Heart left ventricle (tissue), 16 donors: ENCODE measurements at regions of chr6 and their contacts with region 1.

Region 1: DNA sequence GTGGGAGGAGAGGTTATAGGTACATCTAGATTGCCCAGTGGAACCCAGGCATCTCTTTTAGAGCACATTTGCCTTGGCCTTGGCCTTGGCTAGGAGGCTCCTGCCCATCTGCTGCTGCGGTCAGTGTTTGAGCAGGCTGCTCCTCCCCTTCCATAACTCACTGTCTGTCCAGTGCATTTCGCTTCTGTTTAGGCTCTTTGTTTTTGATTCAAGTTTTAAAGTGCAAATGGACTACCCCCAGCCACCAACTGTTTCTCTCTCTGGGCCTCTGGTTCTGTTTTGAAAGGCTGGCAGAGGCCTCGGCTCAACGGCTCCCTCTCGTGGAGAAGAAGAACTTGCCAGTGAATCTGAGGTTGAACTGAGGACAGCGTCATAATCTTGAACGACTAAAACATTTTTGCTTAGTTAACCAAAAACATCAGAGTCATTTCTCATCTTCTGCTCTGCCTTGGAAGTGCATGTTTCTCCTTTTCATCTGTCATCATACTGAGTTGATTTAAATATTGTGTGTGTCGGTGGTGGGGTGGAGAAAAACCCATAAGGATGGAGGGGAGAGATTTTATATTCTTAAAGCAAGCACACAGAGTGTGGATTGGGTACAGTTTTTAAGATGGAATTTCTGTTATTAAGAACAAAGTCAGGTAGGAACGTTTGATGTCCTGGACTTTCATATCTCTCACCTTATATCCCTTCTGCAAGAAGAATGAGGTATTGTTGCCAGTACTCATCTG is 171.4 kb downstream of the DTNBP1 start:
- DNase-seq: peak in 4 of 5 donors; percentile 71 to 81 (median 80)
- ATAC-seq: peak; percentile 43 to 69 (median 62)
- H3K4me3 ChIP-seq: no peak overlapping the region
- H3K27ac ChIP-seq: peak overlapping the region in 7 of 12 donors; percentile 14 to 58 (median 32)
- H3K4me1 ChIP-seq: peaks cover 0 to 47% (median 30%) of the 10 kb centered on the region in 12 donors
- H3K27me3 ChIP-seq: no peaks in the 10 kb centered on the region
- CTCF ChIP-seq: peak; percentile 89 to 98 (median 96)
- POLR2A ChIP-seq: no peak

Region 2: GRCh38 chr6:14200047-14200446 is 1291.4 kb before region 1 on chr6:
- intact Hi-C with region 1: loop called in 2 of 10 experiments (anchors 5 to 10 kb)
- DNase-seq: no peak
- ATAC-seq: no peak
- H3K4me3 ChIP-seq: no peak overlapping the region
- H3K27ac ChIP-seq: no peak overlapping the region
- H3K4me1 ChIP-seq: no peaks in the 10 kb centered on the region
- H3K27me3 ChIP-seq: no peaks in the 10 kb centered on the region
- CTCF ChIP-seq: no peak
- POLR2A ChIP-seq: no peak

Region 3: DNA sequence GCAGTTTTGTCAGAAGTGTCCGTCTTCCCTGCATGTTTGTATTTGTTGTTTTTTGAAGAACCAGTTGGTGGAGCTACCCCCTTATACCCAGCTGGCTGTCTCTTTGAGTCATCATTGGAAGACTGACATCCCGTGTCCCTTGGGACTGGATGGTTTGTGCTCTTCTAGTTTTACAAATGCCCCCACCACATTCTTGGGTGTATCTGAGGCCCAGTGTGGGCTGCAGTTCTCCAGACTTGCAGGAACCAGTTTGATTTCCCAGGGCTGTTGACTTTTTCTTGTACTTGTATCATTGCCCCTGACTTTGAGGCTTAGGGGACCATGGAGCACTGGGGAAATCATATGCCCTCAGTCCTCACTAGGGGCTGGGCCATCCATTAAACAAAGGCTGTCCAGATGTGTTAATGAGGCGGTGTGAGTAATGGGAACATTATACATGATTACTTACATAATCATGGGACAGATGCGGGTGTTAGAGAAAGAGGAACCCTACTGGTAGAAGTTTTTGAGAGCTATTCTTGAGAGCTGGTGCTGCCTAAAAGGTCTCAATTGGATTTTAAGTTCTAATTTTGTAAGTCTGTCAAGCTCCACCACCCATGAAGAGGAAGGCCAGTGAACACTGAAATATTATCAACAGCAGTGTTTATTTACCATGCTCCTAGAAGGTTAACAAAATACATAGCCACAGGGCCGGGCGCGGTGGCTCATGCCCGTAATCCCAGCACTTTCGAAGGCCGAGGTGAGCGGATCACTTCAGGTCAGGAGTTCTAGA is 237.2 kb before region 1 on chr6:
- intact Hi-C with region 1: loop called in 7 of 10 experiments (anchors 5 to 10 kb)
- DNase-seq: no peak
- ATAC-seq: no peak
- H3K4me3 ChIP-seq: no peak overlapping the region
- H3K27ac ChIP-seq: peak overlapping the region in 1 of 12 donors; percentile 47
- H3K4me1 ChIP-seq: peaks cover 0 to 95% (median 45%) of the 10 kb centered on the region in 12 donors
- H3K27me3 ChIP-seq: no peaks in the 10 kb centered on the region
- CTCF ChIP-seq: peak in 1 of 12 donors; percentile 11
- POLR2A ChIP-seq: no peak

Region 4: GRCh38 chr6:15441215-15441868 is 50.1 kb before region 1 on chr6:
- intact Hi-C with region 1: loop called in 4 of 10 experiments (anchors 2 to 5 kb)
- DNase-seq: peak in 3 of 5 donors; percentile 35 to 42 (median 37)
- ATAC-seq: peak in 3 of 4 donors; percentile 71 to 75 (median 74)
- H3K4me3 ChIP-seq: no peak overlapping the region
- H3K27ac ChIP-seq: no peak overlapping the region
- H3K4me1 ChIP-seq: peaks cover 3 to 87% (median 60%) of the 10 kb centered on the region in 12 donors
- H3K27me3 ChIP-seq: no peaks in the 10 kb centered on the region
- CTCF ChIP-seq: peak; percentile 67 to 92 (median 82)
- POLR2A ChIP-seq: no peak

Region 5: DNA sequence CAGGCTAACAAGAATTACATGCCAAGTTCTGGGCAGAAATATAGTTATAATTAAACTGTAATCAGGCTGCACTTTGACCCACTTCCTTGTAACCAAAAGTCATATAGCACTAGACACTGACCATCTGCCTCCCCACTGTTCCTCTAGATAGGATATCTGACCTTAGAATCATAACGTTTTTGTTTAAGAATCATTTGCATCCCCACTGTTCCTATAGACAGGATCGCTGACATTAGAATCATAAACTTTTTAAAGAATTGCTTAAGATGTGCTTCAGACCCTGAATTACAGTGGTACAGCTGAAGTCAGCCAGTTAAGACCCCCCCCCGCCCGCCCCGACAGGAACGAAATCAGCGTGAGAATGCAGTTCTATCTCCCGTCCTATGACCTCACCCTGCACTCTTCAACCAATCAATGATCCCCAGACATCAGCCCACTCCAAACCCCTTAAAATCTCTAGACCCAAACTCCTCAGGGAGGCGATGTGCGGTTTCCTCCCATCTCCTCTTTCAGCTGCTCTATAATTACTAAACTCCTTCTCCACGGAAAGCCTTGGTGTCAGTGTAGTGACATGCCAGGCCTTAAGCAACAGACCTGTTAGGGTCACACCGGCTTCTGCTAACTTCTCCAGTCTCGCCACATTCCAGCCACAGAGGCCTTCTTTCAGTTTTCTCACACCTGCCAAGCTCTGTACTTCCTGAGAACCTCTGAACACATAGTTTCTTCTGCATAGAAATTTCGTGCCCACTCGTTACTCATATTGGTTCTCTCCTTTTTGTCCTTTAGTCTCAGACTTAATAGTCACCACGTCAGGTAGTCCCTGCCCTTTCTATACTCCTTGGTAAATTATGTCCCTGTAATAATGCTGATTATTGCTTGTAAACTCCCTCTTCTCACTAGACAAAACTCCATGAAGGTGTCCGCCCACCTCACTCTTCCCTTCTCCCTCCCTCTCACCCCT is 77.9 kb after region 1 on chr6:
- intact Hi-C with region 1: no loop called
- DNase-seq: no peak
- ATAC-seq: peak in 3 of 4 donors; percentile 48 to 83 (median 68)
- H3K4me3 ChIP-seq: no peak overlapping the region
- H3K27ac ChIP-seq: peak overlapping the region in 1 of 12 donors; percentile 24
- H3K4me1 ChIP-seq: peaks cover 0 to 15% (median 7%) of the 10 kb centered on the region in 12 donors
- H3K27me3 ChIP-seq: no peaks in the 10 kb centered on the region
- CTCF ChIP-seq: no peak
- POLR2A ChIP-seq: no peak